WTC11 (cell line): ENCODE measurements at regions of chr10 and their contacts with region 1.

Region 1: GRCh38 chr10:14536241-14537213 is 205.8 kb upstream of the FRMD4A start:
- DNase-seq: peak; percentile 91
- ATAC-seq: peak; percentile 97
- H3K4me3 Mint-ChIP-seq: no peak overlapping the region
- H3K27ac Mint-ChIP-seq: no peak overlapping the region
- H3K4me1 Mint-ChIP-seq: peaks cover 14% of the 10 kb centered on the region
- H3K27me3 Mint-ChIP-seq: no peaks in the 10 kb centered on the region
- CTCF ChIP-seq: peak; percentile 66; the same call in 1 of the 2 replicates

Region 2: GRCh38 chr10:14524691-14525324 is 11.7 kb before region 1 on chr10:
- CTCF ChIA-PET with region 1: no interaction called
- POLR2A ChIA-PET with region 1: no interaction called
- DNase-seq: no peak
- ATAC-seq: no peak
- H3K4me3 Mint-ChIP-seq: no peak overlapping the region
- H3K27ac Mint-ChIP-seq: no peak overlapping the region
- H3K4me1 Mint-ChIP-seq: peaks cover 6% of the 10 kb centered on the region
- H3K27me3 Mint-ChIP-seq: no peaks in the 10 kb centered on the region
- CTCF ChIP-seq: no peak

Region 3: DNA sequence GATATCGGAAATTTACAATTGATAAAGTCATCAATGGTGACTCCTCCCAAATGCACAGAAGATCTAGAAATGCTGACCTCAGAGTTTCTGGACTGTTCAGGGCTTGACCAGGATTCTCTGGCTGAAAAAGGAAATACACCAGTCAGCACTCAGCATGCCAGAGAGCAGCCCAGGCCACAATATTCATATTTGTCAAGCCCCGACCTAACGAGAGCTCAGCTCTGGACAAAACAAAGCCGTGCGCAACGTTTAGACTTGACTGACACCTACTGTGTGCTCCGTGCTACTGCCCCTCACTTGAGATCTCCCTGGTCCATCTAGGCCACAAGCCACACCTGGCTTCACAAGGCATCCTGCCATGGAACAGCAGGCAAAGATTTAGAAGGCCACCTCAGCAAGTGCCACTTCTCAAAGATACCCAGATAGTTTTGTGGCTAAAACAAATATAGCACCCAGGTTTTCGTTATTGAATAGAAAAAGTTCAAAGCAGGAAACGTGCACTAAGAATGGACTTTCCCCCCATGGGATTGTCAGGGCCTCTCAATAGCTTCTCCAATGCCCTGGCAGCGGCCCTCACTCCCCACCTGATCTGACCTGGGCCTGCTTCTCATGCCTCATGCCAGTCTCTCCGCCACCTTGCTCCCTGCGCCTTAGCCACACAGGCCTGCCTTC is 19.9 kb after region 1 on chr10:
- CTCF ChIA-PET with region 1: interaction called, 10 read pairs
- POLR2A ChIA-PET with region 1: no interaction called
- DNase-seq: peak; percentile 39
- ATAC-seq: peak; percentile 81
- H3K4me3 Mint-ChIP-seq: no peak overlapping the region
- H3K27ac Mint-ChIP-seq: peak overlapping the region; percentile 84
- H3K4me1 Mint-ChIP-seq: peaks cover 50% of the 10 kb centered on the region
- H3K27me3 Mint-ChIP-seq: no peaks in the 10 kb centered on the region
- CTCF ChIP-seq: no peak

Region 4: GRCh38 chr10:14822879-14823755 is 286.6 kb after region 1 on chr10:
- CTCF ChIA-PET with region 1: interaction called, 28 read pairs
- POLR2A ChIA-PET with region 1: no interaction called
- DNase-seq: peak; percentile 29
- ATAC-seq: 0 out of 2 replicates have a peak, but pooled peaks have one; percentile 47
- H3K4me3 Mint-ChIP-seq: no peak overlapping the region
- H3K27ac Mint-ChIP-seq: no peak overlapping the region
- H3K4me1 Mint-ChIP-seq: peaks cover 21% of the 10 kb centered on the region
- H3K27me3 Mint-ChIP-seq: peaks cover 13% of the 10 kb centered on the region; the same call in 1 of the 2 replicates
- CTCF ChIP-seq: no peak

Region 5: GRCh38 chr10:14837757-14838581 is 301.4 kb after region 1 on chr10 and contains the starts of genes CDNF, HSPA14 and MSANTD7:
- CTCF ChIA-PET with region 1: interaction called, 26 read pairs
- POLR2A ChIA-PET with region 1: no interaction called
- DNase-seq: peak; percentile 99
- ATAC-seq: peak; percentile 97
- H3K4me3 Mint-ChIP-seq: peak within 1 kb of the TSS; percentile 91
- H3K27ac Mint-ChIP-seq: peak within 1 kb of the TSS; percentile 97
- H3K4me1 Mint-ChIP-seq: peaks cover 24% of the 10 kb centered on the region
- H3K27me3 Mint-ChIP-seq: no peaks in the 10 kb centered on the region
- CTCF ChIP-seq: no peak
- total RNA-seq, gene CDNF: 0.27 to 1.4 TPM (median 0.41 TPM) in 3 replicates
- total RNA-seq, gene HSPA14: 26.1 to 30.1 TPM (median 27.1 TPM) in 3 replicates
- total RNA-seq, gene MSANTD7: 13.9 to 14.6 TPM (median 14.3 TPM) in 3 replicates